CD8-positive, alpha-beta T cell (primary cell): ENCODE measurements at regions of chr17 and their contacts with region 1.

Region 1: DNA sequence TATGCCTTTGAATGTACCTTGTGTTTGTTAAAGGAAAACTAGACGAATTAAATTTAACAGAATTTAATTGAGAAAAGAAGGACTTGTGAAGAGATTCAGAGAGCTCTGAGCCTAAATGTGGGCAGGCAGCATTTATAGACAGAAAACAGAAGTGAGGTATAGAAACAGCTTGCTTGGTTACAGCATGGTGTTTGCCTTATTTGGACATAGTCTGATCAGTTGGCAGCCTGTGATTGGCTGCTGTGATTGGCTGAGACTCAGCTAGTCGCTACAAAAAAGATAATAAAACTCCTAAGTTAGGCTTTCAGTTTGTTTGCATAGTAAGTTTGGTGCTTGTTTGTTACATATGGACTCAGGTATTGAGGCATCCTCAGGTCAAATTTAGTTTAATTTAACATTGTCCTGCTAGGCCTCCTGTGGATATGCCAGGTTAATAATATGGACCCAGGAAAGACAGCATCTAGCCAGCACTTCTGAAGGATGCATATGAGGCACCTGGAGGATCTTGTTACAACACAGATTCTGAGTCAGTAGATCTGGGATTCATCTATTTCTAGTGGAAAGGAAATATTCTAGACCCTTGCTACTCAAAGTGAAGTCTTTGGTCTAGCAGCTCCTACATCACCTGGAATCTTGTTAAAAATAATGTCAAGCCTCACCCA is 43.4 kb downstream of the SLFN5 start:
- DNase-seq: peak in 3 of 9 experiments; percentile 50 to 67 (median 55)
- ATAC-seq: peak; percentile 97
- H3K4me3 ChIP-seq: peak overlapping the region in 1 of 2 experiments; percentile 6
- H3K4me3 Mint-ChIP-seq: peak overlapping the region; percentile 42
- H3K27ac ChIP-seq: peak overlapping the region; percentile 16 to 45
- H3K27ac Mint-ChIP-seq: peak overlapping the region; percentile 89
- H3K4me1 ChIP-seq: peaks cover 25% of the 10 kb centered on the region
- H3K4me1 Mint-ChIP-seq: peaks cover 47% of the 10 kb centered on the region
- H3K27me3 ChIP-seq: no peaks in the 10 kb centered on the region
- H3K27me3 Mint-ChIP-seq: no peaks in the 10 kb centered on the region
- CTCF ChIP-seq: no peak

Region 2: GRCh38 chr17:35273684-35274083 is 12.6 kb before region 1 on chr17:
- CTCF ChIA-PET with region 1: no interaction called
- POLR2A ChIA-PET with region 1: interaction called, 5 read pairs
- intact Hi-C with region 1: loop called in 1 of 2 experiments (anchors 1 kb)
- DNase-seq: no peak
- ATAC-seq: no peak
- H3K4me3 ChIP-seq: no peak overlapping the region
- H3K4me3 Mint-ChIP-seq: no peak overlapping the region
- H3K27ac ChIP-seq: no peak overlapping the region
- H3K27ac Mint-ChIP-seq: peak overlapping the region; percentile 89
- H3K4me1 ChIP-seq: peaks cover 21% of the 10 kb centered on the region
- H3K4me1 Mint-ChIP-seq: peaks cover 70% of the 10 kb centered on the region
- H3K27me3 ChIP-seq: no peaks in the 10 kb centered on the region
- H3K27me3 Mint-ChIP-seq: no peaks in the 10 kb centered on the region
- CTCF ChIP-seq: no peak